Activated CD4-positive, alpha-beta T cell treated with anti-CD3 and anti-CD28 coated beads for 36 hours (primary cell): ENCODE measurements at regions of chr9 and their contacts with region 1.

Region 1: DNA sequence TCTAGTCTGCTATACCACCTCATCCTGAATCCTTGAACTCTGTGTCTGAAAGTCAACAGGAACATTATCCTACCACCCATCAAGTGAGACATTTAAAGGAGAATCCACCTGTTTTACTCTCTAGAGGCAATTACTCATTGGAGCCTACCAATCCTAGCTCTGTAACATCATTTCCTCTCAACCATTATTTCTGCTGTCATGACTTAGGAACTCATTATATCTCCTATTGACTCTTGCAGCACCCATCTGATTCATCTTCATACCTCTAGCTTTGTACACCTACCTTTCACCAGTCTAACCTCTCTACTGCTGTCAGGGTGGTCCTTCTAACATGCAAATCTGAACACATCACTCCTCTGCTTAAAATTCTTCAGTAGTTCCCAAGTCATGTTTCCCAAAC is 481.5 kb downstream of the NFIB start:
- DNase-seq: no peak
- ATAC-seq: no peak
- H3K4me3 Mint-ChIP-seq: no peak overlapping the region
- H3K27ac Mint-ChIP-seq: no peak overlapping the region
- H3K4me1 Mint-ChIP-seq: no peaks in the 10 kb centered on the region
- H3K27me3 Mint-ChIP-seq: no peaks in the 10 kb centered on the region

Region 2: DNA sequence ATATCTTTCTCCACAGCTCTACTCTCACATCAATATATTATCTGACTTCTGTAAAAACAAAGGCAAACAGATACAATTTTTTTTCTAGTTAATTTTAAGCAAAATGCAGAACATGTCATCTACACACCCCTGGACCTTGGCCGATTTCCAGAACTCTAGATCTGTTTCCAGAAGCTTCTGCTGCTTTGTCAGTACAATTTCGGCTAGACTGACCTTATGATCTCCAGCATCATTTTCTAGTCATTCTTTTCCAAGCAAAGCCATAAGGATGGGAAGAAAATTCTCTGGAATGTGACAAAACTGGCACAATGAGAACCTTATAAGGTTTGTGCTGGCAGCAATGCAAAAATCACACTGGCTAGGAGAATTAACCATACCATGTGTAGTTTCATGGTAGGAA is 420.1 kb before region 1 on chr9:
- CTCF ChIA-PET with region 1: no interaction called
- POLR2A ChIA-PET with region 1: interaction called, 15 read pairs
- intact Hi-C with region 1: no loop called
- DNase-seq: no peak
- ATAC-seq: no peak
- H3K4me3 Mint-ChIP-seq: no peak overlapping the region
- H3K27ac Mint-ChIP-seq: no peak overlapping the region
- H3K4me1 Mint-ChIP-seq: no peaks in the 10 kb centered on the region
- H3K27me3 Mint-ChIP-seq: no peaks in the 10 kb centered on the region